Activated CD8-positive, alpha-beta memory T cell treated with anti-CD3 and anti-CD28 coated beads, Interleukin-2, amount 10 ng/mL, durations not matched to agents 7 days and 5 days (primary cell): ENCODE measurements at regions of chr17 and their contacts with region 1.

Region 1: GRCh38 chr17:28763804-28764266 is 20.0 kb downstream of the TRAF4 start:
- DNase-seq: peak; percentile 86
- ATAC-seq: peak; percentile 70
- H3K4me3 Mint-ChIP-seq: no peak overlapping the region
- H3K27ac Mint-ChIP-seq: peak overlapping the region; percentile 50
- H3K4me1 Mint-ChIP-seq: peaks cover 42% of the 10 kb centered on the region
- H3K27me3 Mint-ChIP-seq: no peaks in the 10 kb centered on the region

Region 2: DNA sequence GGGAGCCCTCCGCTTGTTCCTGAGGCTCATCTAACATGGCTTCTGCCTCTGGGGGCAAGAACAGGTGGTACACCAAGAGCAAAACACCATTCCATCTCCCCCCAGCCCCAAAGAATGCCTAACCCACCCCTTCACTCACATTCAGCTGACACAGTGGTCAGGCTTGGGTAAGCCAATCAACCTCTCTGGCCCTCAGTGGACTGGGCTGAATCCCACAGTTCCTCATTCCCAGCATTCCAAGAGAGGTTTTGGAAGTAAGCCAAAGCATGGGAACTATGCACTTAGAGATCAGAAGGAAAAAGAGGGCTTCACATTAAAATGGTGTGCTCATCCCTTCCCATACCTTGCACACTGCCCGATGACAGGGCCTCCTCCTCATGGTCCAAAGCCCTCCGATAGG is 200.4 kb before region 1 on chr17:
- CTCF ChIA-PET with region 1: no interaction called
- DNase-seq: no peak
- ATAC-seq: no peak
- H3K4me3 Mint-ChIP-seq: no peak overlapping the region
- H3K27ac Mint-ChIP-seq: no peak overlapping the region
- H3K4me1 Mint-ChIP-seq: peaks cover 17% of the 10 kb centered on the region
- H3K27me3 Mint-ChIP-seq: no peaks in the 10 kb centered on the region

Region 3: GRCh38 chr17:28575233-28575771 is 188.5 kb before region 1 on chr17:
- CTCF ChIA-PET with region 1: no interaction called
- DNase-seq: no peak
- ATAC-seq: no peak
- H3K4me3 Mint-ChIP-seq: no peak overlapping the region
- H3K27ac Mint-ChIP-seq: no peak overlapping the region
- H3K4me1 Mint-ChIP-seq: peaks cover 59% of the 10 kb centered on the region
- H3K27me3 Mint-ChIP-seq: no peaks in the 10 kb centered on the region

Region 4: DNA sequence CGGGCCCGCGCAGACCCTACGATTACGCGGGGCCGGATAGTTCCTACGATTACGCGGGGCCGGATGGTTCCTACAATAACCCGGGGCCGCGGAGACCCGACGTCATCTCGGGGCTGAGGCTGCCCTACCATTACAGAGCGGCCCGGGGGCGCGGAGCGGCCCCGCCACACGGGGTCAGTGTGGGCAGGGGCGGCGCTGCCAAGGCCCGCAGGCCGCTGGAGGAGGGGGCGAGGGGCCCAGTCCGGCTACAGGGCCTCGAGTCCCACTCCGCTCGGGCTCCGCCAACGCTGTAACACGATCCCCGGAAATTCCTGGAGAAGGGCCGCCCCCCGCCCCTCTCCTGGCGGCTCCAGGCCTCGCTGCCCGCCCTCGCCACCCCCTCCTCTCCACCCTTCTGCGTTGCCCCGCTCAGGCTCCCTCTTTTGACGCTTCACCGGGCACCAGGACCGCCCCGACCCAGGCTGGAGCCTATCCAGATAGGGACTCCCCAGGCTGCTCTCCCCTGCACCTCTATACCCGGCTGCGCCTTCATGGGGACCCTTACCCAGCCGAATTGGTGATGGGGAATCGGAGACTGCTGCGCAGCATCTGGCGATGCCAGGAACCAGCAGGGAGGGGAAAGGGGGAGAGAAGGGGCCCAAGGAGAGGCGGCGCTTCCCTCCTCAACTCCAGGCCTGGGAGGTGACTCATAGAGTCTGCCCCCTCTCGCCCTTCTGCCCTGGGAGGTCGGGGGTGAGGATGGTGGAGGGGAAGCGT is 46.1 kb before region 1 on chr17 and contains the start of gene RAB34:
- CTCF ChIA-PET with region 1: interaction called, 12 read pairs
- DNase-seq: no peak
- ATAC-seq: no peak
- H3K4me3 Mint-ChIP-seq: peak within 1 kb of the TSS; percentile 40
- H3K27ac Mint-ChIP-seq: peak within 1 kb of the TSS; percentile 24
- H3K4me1 Mint-ChIP-seq: peaks cover 29% of the 10 kb centered on the region
- H3K27me3 Mint-ChIP-seq: peaks cover 36% of the 10 kb centered on the region
- total RNA-seq, gene RAB34: 5.6 to 8.3 TPM

Region 5: GRCh38 chr17:28777178-28777577 is 13.3 kb after region 1 on chr17:
- CTCF ChIA-PET with region 1: interaction called, 44 read pairs
- DNase-seq: no peak
- ATAC-seq: no peak
- H3K4me3 Mint-ChIP-seq: no peak overlapping the region
- H3K27ac Mint-ChIP-seq: peak overlapping the region; percentile 29
- H3K4me1 Mint-ChIP-seq: peaks cover 26% of the 10 kb centered on the region
- H3K27me3 Mint-ChIP-seq: no peaks in the 10 kb centered on the region

Region 6: GRCh38 chr17:28828294-28829040 is 64.6 kb after region 1 on chr17:
- CTCF ChIA-PET with region 1: interaction called, 13 read pairs
- DNase-seq: no peak
- ATAC-seq: no peak
- H3K4me3 Mint-ChIP-seq: no peak overlapping the region
- H3K27ac Mint-ChIP-seq: no peak overlapping the region
- H3K4me1 Mint-ChIP-seq: peaks cover 3% of the 10 kb centered on the region
- H3K27me3 Mint-ChIP-seq: no peaks in the 10 kb centered on the region

Region 7: DNA sequence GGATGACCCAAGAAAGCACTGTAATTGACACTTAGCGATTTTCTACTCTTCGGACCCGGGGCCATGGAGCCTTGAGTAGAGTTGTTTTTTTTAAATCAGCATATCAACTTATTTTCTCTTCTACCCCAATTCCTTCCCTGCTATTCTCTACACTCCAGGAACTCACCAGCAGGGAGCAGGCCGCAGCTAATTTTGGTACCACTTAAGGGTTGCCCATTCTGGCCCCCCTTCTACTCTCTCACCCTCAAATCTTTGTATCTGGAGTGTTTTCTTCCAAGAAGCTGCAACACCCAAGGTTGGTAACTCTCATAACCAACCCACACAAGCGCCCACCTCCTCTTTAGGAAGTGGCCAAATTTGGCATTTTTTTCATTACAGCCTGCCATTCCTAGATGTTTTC is 85.4 kb after region 1 on chr17:
- CTCF ChIA-PET with region 1: interaction called, 37 read pairs
- DNase-seq: no peak
- ATAC-seq: peak; percentile 38
- H3K4me3 Mint-ChIP-seq: no peak overlapping the region
- H3K27ac Mint-ChIP-seq: no peak overlapping the region
- H3K4me1 Mint-ChIP-seq: peaks cover 9% of the 10 kb centered on the region
- H3K27me3 Mint-ChIP-seq: no peaks in the 10 kb centered on the region

Region 8: DNA sequence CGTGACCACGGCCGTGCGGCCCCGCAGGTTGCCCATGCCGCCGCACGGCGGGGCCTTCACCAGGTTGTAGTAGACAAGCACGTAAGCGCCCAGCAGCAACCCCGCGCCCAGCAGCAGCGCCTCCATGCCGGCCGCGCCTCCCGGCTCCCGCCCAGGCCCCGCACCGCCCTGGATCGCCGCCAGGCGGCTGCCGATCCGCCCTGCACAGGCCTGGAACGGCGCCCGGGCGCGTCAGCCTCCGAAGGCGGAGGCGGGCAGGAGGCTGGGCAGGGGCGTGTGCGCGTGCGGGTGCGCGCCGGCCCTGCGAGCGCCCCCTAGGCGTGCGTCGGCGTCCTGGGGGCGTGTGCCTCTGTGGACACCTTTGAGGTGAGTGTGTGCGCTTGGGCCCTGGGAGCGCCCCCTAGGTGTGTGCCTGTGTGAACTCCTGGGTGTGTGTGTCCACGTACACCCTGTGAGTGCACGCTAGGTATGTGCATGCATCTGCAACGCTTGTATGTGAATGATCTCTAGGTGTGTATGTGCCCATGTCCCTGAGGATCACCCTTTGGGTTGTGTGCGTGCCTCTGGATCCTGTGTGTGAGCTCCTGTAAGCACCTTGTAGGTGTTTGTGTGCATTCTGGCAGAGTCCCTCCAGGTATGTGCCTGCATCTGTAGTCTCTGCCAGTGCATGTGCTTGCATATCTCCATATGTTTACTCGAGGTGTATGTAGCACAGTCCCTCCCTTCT is 139.1 kb after region 1 on chr17 and contains the start of gene DHRS13:
- CTCF ChIA-PET with region 1: interaction called, 68 read pairs
- DNase-seq: peak; percentile 94
- ATAC-seq: peak; percentile 97
- H3K4me3 Mint-ChIP-seq: peak within 1 kb of the TSS; percentile 89
- H3K27ac Mint-ChIP-seq: peak within 1 kb of the TSS; percentile 84
- H3K4me1 Mint-ChIP-seq: peaks cover 43% of the 10 kb centered on the region
- H3K27me3 Mint-ChIP-seq: no peaks in the 10 kb centered on the region
- total RNA-seq, gene DHRS13: 23.1 to 25.9 TPM

Region 9: GRCh38 chr17:28951991-28952975 is 188.4 kb after region 1 on chr17:
- CTCF ChIA-PET with region 1: interaction called, 28 read pairs
- DNase-seq: peak; percentile 98
- ATAC-seq: peak; percentile 73
- H3K4me3 Mint-ChIP-seq: no peak overlapping the region
- H3K27ac Mint-ChIP-seq: no peak overlapping the region
- H3K4me1 Mint-ChIP-seq: peaks cover 16% of the 10 kb centered on the region
- H3K27me3 Mint-ChIP-seq: no peaks in the 10 kb centered on the region